Right ventricle myocardium superior (tissue), 1 donor: ENCODE measurements at regions of chr17 and their contacts with region 1.

Region 1: DNA sequence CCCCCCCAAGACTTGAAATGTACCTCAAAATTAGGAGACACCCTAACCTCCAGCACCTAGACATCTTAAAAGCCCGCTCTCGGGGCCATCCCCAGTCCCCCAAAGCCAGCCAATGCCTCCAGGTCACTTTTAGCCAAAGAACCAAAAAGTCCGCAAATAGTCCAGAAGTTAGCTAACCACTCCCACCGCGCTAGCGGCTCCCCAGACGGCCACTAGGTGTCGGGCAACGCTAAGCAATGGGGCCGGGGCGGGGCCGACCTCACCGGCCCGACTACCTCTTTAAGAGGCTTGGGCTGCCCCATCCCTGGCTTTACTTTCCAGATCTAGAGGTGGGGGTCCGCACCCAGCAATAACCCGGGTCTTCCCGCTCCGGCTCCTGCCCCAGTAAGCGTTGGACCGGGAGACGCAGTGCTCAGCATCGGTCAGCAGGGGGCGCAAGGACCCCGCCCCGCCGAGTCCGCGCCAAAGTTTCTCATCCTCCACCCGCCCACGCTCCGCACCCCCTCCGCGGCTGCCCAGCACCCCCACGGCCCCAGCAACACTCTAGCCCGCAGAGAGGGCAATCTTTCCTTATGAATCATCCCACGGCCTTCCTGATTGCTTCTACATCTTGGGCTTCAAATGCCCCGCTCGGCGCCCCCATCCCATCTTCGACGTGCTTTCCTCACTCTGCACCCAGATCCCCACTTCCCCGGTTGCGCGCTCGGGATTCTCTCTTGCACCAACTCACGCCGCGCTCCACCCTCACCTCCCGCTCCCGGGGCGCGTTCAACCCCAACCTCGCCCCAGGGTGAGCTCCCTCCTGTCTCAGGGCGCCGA is 765 bp downstream of the COL1A1 start:
- DNase-seq: peak; percentile 94
- ATAC-seq: peak; percentile 86

Region 2: GRCh38 chr17:50087246-50087911 is 113.3 kb before region 1 on chr17:
- intact Hi-C with region 1: no loop called
- DNase-seq: peak; percentile 80
- ATAC-seq: peak; percentile 90

Region 3: GRCh38 chr17:50272711-50273653 is 72.3 kb after region 1 on chr17:
- intact Hi-C with region 1: loop called (anchors 1 kb)
- DNase-seq: peak; percentile 74
- ATAC-seq: peak; percentile 85

Region 4: GRCh38 chr17:50297407-50297865 is 96.8 kb after region 1 on chr17:
- intact Hi-C with region 1: loop called (anchors 2 kb)
- DNase-seq: peak; percentile 88
- ATAC-seq: peak; percentile 97

Region 5: GRCh38 chr17:50311112-50311460 is 110.4 kb after region 1 on chr17:
- intact Hi-C with region 1: no loop called
- DNase-seq: no peak
- ATAC-seq: no peak